Right ventricle myocardium inferior (tissue), 1 donor: ENCODE measurements at regions of chr13 and their contacts with region 1.

Region 1: DNA sequence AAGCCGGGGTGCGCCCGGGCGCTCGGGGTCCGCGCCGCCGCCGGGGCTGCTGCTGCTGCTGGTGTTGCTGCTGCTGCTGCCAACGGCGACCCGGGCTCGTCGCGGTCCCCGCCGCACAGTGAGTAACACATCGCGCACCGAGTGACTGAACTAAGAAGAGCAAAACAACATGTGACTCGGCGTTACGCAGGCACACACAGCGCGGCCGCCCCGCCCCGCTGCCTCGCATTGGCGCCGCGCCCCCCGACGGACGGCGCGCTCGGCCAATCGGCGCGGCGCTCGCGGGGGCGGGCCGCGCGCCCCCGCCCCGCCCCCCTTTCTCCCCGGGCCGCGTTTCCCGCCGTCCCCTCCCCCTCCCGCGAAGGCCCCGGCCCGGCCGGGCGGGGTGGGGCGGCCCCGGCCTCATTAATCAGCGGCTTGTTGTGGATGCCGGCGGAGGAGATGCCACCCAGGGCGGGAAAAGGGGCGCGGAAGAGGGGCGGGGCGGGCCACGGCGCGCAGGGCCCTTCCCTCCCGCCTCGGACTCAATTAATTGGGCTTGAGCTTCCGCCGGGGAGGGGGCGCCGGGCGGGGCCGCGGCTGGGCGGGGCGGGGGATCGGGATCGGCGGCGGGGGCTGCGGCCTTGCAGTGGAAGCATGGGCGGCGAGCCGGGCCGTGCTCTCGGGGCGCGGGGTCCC is at the start of gene IRS2:
- DNase-seq: peak; percentile 96
- ATAC-seq: peak; percentile 86
- total RNA-seq, gene IRS2: 9.7 TPM

Region 2: DNA sequence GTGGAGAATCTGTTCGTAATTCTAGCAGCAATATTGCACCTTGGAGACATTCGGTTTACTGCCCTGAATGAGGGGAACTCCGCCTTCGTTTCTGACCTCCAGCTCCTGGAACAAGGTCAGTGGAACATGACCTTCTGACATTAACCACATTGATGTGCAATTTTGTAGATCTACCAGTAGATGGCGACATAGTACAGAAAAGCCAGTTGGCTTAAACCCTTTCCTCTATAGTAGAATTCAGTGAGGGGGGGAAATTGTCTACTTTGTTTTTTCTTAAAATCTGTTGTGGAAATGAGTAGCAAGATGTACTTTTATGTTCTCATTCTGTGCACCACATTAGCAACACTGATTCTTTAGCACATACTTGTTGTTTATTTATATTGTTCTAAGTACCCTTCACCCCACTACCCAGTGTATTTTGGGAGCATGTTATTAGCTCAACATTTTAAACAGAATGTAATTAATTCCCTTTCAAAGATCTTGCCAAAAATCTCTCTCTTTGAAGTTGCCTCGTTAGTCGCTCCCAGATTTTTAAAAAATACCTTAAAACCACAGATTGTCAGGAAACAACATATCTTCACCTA is 825.0 kb before region 1 on chr13:
- intact Hi-C with region 1: loop called (anchors 2 kb)
- DNase-seq: no peak
- ATAC-seq: peak; percentile 73

Region 3: DNA sequence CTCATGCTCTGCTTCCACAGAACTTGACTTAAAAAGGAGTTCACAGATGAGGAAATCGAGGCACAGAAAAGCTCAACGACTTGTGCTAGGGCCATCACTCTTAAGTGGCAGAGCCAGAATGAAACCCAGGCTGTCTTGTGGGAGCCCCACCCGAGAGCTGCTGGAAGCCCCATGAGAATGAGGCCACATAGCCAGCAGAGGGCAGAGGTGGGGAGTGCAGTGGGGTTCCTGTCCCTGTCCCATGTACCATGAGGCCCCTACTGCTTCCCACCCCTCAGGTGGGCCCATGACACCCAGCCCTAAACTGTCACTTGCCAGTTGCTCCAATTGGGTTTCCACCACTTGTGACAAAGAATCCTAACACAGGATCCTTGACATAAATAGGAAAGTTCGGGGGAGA is 176.1 kb before region 1 on chr13:
- intact Hi-C with region 1: loop called (anchors 5 kb)
- DNase-seq: peak; percentile 63
- ATAC-seq: peak; percentile 60

Region 4: GRCh38 chr13:109764470-109765291 is 21.9 kb before region 1 on chr13:
- intact Hi-C with region 1: no loop called
- DNase-seq: no peak
- ATAC-seq: peak; percentile 65

Region 5: GRCh38 chr13:109869312-109870237 is 83.0 kb after region 1 on chr13:
- intact Hi-C with region 1: loop called (anchors 5 kb)
- DNase-seq: peak; percentile 85
- ATAC-seq: peak; percentile 87

Region 6: DNA sequence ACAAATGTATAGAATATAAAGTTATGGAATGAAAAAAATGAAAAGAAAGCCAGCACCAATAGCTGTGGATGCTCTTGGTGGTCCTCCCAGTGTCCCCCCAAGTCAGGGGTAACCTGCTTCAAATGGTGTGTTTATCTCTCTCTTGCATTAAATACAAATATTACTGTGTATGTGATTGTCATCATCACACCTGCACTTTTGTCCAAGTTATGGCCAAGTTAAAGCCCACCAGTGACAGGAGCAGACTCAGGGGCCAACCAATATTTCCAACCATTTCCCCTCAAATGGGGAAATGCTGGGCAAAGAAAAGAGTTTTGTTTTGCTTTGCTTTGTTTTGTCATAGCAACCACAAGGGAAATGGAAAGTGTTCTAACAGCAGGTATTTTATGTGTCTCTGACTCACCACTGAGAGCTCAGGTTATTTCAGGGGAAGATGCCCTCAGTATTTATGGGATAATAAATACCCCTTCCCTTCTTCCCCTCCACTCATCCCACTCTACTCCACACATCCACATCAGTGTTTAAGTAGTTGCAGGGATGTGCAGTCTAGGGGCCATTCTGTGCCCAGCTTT is 386.7 kb after region 1 on chr13:
- intact Hi-C with region 1: no loop called
- DNase-seq: no peak
- ATAC-seq: no peak